Endothelial cell of umbilical vein (primary cell): ENCODE measurements at regions of chr1 and their contacts with region 1.

Region 1: DNA sequence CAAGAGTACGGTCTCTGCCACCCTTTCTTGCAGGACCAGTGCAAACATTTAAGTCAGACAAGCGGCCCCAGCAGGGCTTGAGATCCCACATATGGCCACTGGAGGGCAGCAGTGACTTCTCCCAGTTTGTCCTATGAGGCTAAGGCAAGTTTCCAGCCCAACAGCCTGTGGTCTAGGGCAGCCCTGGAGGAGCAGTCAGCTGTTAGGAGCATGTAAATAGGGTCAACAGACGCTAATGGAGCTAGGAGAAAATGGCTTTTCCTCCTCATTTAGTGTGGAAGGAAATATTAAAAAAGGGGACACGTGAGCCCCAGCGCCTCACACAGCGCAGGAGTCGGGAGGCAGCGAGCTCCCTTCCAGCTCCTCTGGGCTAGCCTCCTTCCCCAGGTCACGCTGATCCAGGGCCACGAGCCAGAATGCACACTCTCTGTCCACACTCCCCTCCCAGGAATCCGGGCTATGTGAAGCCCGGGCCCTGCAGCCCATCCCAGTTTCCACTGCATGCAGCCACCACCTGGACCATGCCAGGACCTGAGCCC is 95.6 kb downstream of the LAMC2 start:
- DNase-seq: peak; percentile 92
- H3K4me3 ChIP-seq: no peak overlapping the region
- H3K27ac ChIP-seq: no peak overlapping the region
- H3K4me1 ChIP-seq: peaks cover 12% of the 10 kb centered on the region
- H3K27me3 ChIP-seq: no peaks in the 10 kb centered on the region
- CTCF ChIP-seq: peak; percentile 83 to 91
- POLR2A ChIP-seq: no peak

Region 2: DNA sequence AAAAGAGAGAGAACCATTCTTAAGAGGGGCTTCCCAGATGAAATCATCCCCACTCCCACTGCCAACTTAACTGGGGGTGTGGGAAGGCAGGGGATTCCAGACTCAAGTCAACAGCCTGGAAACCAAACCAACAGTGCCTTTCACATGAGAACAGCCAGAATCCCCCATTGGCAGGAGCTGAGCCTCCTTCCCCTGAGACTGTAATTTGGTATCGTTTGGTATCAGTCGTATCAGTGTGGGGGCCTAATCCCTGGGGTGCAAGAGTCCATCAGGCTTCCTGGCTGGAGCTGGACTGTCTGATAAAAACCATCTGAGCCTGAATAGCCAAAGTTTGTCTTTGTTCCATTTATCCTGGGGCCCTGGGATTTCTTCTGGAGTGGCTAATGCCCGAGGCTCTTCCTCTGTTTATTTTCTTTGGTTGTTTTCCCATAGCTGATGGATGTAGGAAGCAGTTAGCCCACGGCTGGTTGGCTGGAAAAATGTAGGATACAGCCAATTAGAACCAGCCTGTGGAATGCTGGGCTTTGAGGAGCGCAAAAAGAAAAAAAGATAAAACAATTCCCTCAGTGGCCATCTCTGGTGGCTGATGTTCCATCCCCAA is 11.0 kb before region 1 on chr1:
- CTCF ChIA-PET with region 1: interaction called, 32 read pairs
- POLR2A ChIA-PET with region 1: no interaction called
- dilution Hi-C with region 1: no loop called
- intact Hi-C with region 1: no loop called
- DNase-seq: peak; percentile 92
- H3K4me3 ChIP-seq: no peak overlapping the region
- H3K27ac ChIP-seq: peak overlapping the region; percentile 56
- H3K4me1 ChIP-seq: peaks cover 28% of the 10 kb centered on the region
- H3K27me3 ChIP-seq: no peaks in the 10 kb centered on the region
- CTCF ChIP-seq: no peak
- POLR2A ChIP-seq: no peak

Region 3: GRCh38 chr1:183306317-183307042 is 24.9 kb after region 1 on chr1:
- CTCF ChIA-PET with region 1: interaction called, 13 read pairs
- POLR2A ChIA-PET with region 1: no interaction called
- dilution Hi-C with region 1: no loop called
- intact Hi-C with region 1: no loop called
- DNase-seq: peak; percentile 15
- H3K4me3 ChIP-seq: no peak overlapping the region
- H3K27ac ChIP-seq: no peak overlapping the region
- H3K4me1 ChIP-seq: no peaks in the 10 kb centered on the region
- H3K27me3 ChIP-seq: no peaks in the 10 kb centered on the region
- CTCF ChIP-seq: peak in 1 of 2 donors; percentile 18
- POLR2A ChIP-seq: no peak

Region 4: DNA sequence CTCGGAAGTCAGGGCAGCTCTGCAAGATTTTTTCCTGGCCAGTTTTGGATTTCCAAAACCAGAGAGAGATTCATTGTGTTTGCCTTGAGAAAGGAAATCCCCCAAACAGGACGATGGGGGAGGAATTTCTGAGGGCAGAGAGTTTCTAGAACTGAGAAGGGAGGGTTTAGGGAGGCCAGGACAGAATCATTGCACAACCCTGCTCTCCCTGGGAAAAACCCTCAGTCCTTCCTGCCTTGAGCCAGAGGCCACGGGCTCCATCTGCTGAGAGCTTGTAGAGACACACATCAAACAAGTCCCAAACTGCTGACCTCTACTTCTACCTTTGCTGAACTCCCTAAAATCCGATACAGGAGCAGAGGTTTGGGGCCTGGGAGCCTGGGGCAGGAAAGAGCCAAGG is 36.8 kb after region 1 on chr1:
- CTCF ChIA-PET with region 1: interaction called, 23 read pairs
- POLR2A ChIA-PET with region 1: no interaction called
- dilution Hi-C with region 1: no loop called
- intact Hi-C with region 1: loop called (anchors 1 kb)
- DNase-seq: peak; percentile 61
- H3K4me3 ChIP-seq: no peak overlapping the region
- H3K27ac ChIP-seq: no peak overlapping the region
- H3K4me1 ChIP-seq: no peaks in the 10 kb centered on the region
- H3K27me3 ChIP-seq: peaks cover 0 to 4% of the 10 kb centered on the region in 2 experiments
- CTCF ChIP-seq: peak; percentile 6 to 53
- POLR2A ChIP-seq: no peak

Region 5: DNA sequence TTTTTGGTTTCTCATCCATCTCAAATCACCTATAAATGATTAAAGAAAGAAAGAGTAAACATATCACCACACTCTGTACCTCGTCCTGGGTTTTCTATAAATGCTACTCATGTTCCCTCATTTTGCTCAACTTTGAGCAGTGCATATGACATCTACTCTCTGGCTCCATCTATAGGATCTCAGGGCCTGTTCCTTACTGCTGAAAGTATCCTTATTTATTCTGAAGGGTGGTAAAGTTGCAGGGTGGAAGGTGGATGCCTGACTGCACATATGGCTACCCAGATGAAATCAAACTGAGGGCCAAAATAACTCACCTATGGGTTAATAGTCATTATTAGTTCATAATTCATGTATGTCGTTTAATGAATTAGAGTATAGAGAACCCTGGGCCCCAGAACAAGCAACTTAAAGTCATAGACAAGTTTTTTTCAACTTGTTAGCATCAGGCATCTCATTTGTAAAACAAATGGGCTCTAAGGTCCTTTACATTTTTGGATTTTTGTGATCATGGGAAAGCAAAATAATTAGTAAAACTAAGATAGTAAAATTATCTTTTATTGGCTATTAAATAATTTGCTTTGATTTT is 262.1 kb after region 1 on chr1:
- CTCF ChIA-PET with region 1: interaction called, 3 read pairs
- POLR2A ChIA-PET with region 1: no interaction called
- dilution Hi-C with region 1: no loop called
- intact Hi-C with region 1: loop called (anchors 1 kb)
- DNase-seq: peak; percentile 75
- H3K4me3 ChIP-seq: no peak overlapping the region
- H3K27ac ChIP-seq: no peak overlapping the region
- H3K4me1 ChIP-seq: no peaks in the 10 kb centered on the region
- H3K27me3 ChIP-seq: no peaks in the 10 kb centered on the region
- CTCF ChIP-seq: peak; percentile 62 to 71
- POLR2A ChIP-seq: no peak

Region 6: GRCh38 chr1:183622884-183623785 is 341.5 kb after region 1 on chr1:
- CTCF ChIA-PET with region 1: no interaction called
- POLR2A ChIA-PET with region 1: no interaction called
- dilution Hi-C with region 1: no loop called
- intact Hi-C with region 1: loop called (anchors 1 kb)
- DNase-seq: peak; percentile 56
- H3K4me3 ChIP-seq: no peak overlapping the region
- H3K27ac ChIP-seq: no peak overlapping the region
- H3K4me1 ChIP-seq: peaks cover 4% of the 10 kb centered on the region
- H3K27me3 ChIP-seq: no peaks in the 10 kb centered on the region
- CTCF ChIP-seq: peak; percentile 34 to 45
- POLR2A ChIP-seq: no peak